MCF 10A (cell line): ENCODE measurements at regions of chr15 and their contacts with region 1.

Region 1: GRCh38 chr15:74906446-74907162 is at the start of gene FAM219B:
- DNase-seq: peak; percentile 87
- H3K4me3 Mint-ChIP-seq: peak within 1 kb of the TSS; percentile 95
- H3K27ac Mint-ChIP-seq: peak within 1 kb of the TSS; percentile 97
- H3K4me1 Mint-ChIP-seq: peaks cover 15% of the 10 kb centered on the region
- H3K27me3 Mint-ChIP-seq: no peaks in the 10 kb centered on the region
- CTCF ChIP-seq: no peak
- total RNA-seq, gene FAM219B: 62.9 and 68.4 TPM in 2 replicates

Region 2: GRCh38 chr15:74781431-74782258 is 125.0 kb before region 1 on chr15 and contains the start of gene CSK:
- CTCF ChIA-PET with region 1: interaction called, 23 read pairs
- POLR2A ChIA-PET with region 1: interaction called, 11 read pairs
- intact Hi-C with region 1: no loop called
- DNase-seq: peak; percentile 68
- H3K4me3 Mint-ChIP-seq: peak within 1 kb of the TSS; percentile 92
- H3K27ac Mint-ChIP-seq: peak within 1 kb of the TSS; percentile 85
- H3K4me1 Mint-ChIP-seq: peaks cover 23% of the 10 kb centered on the region
- H3K27me3 Mint-ChIP-seq: no peaks in the 10 kb centered on the region
- CTCF ChIP-seq: peak; percentile 58
- total RNA-seq, gene CSK: 50.4 and 65.3 TPM in 2 replicates

Region 3: GRCh38 chr15:74816808-74817674 is 89.6 kb before region 1 on chr15:
- CTCF ChIA-PET with region 1: interaction called, 7 read pairs
- POLR2A ChIA-PET with region 1: interaction called, 9 read pairs
- intact Hi-C with region 1: loop called (anchors 1 kb)
- DNase-seq: peak; percentile 70
- H3K4me3 Mint-ChIP-seq: no peak overlapping the region
- H3K27ac Mint-ChIP-seq: peak overlapping the region; percentile 82
- H3K4me1 Mint-ChIP-seq: peaks cover 45% of the 10 kb centered on the region
- H3K27me3 Mint-ChIP-seq: no peaks in the 10 kb centered on the region
- CTCF ChIP-seq: peak; percentile 38

Region 4: DNA sequence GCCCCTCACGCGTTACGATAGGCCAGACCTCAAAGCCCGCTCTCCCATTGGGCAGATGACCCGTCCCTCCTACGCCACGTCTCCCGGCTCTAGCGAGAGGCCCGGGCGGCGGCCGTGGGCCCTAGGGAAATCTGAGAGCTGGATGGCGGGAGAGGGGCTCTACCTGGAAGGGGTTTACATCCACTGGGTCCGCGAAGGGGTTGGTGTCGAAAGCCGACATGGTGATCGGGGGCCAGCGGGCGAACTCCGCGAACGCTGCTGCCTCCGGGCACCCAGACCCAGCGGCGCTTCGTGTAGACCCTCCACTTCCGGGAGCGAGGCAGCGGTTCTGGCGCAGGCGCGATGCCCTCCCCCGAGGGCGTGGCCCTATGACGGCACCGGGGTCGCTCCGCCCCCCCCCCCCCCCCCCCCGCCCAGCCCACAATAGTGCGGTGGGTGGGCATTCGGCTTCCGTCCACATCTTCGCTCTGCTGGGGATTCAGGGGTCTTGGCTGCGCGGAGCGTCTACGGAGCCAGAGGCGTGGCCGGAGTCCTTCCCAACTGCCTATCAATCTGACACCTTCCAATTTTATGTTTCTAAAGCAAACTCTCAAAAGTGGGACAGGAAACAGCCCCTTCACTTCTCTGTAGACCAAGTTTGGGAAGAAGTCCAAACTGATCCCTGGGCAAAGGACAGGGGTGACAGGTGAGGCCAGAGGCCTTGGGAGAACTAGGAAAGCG is 33.4 kb before region 1 on chr15 and contains the start of gene SCAMP2:
- CTCF ChIA-PET with region 1: interaction called, 24 read pairs
- POLR2A ChIA-PET with region 1: interaction called, 29 read pairs
- intact Hi-C with region 1: no loop called
- DNase-seq: peak; percentile 95
- H3K4me3 Mint-ChIP-seq: peak within 1 kb of the TSS; percentile 100
- H3K27ac Mint-ChIP-seq: peak within 1 kb of the TSS; percentile 95
- H3K4me1 Mint-ChIP-seq: peaks cover 27% of the 10 kb centered on the region
- H3K27me3 Mint-ChIP-seq: no peaks in the 10 kb centered on the region
- CTCF ChIP-seq: no peak
- total RNA-seq, gene SCAMP2: 64.4 and 67.7 TPM in 2 replicates

Region 5: GRCh38 chr15:74884428-74885223 is 22.0 kb before region 1 on chr15:
- CTCF ChIA-PET with region 1: interaction called, 38 read pairs
- POLR2A ChIA-PET with region 1: interaction called, 16 read pairs
- intact Hi-C with region 1: no loop called
- DNase-seq: no peak
- H3K4me3 Mint-ChIP-seq: no peak overlapping the region
- H3K27ac Mint-ChIP-seq: no peak overlapping the region
- H3K4me1 Mint-ChIP-seq: peaks cover 13% of the 10 kb centered on the region
- H3K27me3 Mint-ChIP-seq: no peaks in the 10 kb centered on the region
- CTCF ChIP-seq: no peak

Region 6: GRCh38 chr15:74928771-74929198 is 22.2 kb after region 1 on chr15:
- CTCF ChIA-PET with region 1: interaction called, 9 read pairs
- POLR2A ChIA-PET with region 1: interaction called, 11 read pairs
- intact Hi-C with region 1: no loop called
- DNase-seq: no peak
- H3K4me3 Mint-ChIP-seq: no peak overlapping the region
- H3K27ac Mint-ChIP-seq: no peak overlapping the region
- H3K4me1 Mint-ChIP-seq: no peaks in the 10 kb centered on the region
- H3K27me3 Mint-ChIP-seq: no peaks in the 10 kb centered on the region
- CTCF ChIP-seq: no peak

Region 7: DNA sequence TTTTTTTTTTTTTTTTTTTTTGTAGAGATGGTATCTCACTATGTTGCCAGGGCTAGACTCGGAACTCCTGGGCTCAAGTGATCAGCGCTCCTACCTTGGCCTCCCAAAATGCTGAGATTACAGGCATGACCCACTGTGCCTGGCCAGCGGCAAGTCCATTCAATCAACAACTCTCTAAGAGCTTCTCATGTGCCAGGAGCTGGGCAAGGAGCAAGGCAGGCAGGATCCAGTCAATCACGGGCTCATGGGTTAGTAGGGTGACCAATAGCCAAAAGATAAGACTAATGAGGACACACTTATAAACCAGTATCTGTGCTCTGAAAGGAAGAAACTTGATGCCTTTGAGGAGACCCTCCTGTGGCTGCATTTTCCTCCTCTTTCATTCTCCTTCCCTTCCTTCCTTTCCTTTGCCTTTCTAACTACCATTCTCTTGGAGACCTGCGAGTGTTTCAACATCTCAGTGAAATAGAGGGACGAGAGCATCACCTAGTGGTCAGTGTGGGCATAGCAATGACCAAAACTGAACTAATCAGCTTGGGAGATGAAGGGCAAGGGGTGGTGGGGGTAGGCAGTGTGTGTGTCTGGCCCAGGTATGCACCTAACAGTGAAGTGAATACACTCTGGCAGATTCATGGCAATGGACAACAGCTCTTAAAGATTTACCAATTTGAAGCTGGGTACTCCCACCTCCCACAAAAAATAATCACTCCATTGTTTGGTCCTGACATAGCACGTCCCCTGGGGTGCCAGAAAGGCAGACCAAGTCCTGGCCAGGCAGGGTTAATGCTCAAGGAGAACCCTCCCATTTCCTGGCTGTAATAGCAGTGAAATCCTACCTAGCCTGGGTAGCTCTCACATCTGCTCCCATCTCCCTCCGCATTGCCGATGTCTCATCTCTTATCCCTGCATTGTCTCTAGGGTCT is 43.7 kb after region 1 on chr15:
- CTCF ChIA-PET with region 1: interaction called, 16 read pairs
- POLR2A ChIA-PET with region 1: interaction called, 6 read pairs
- intact Hi-C with region 1: no loop called
- DNase-seq: peak; percentile 80
- H3K4me3 Mint-ChIP-seq: no peak overlapping the region
- H3K27ac Mint-ChIP-seq: no peak overlapping the region
- H3K4me1 Mint-ChIP-seq: peaks cover 7% of the 10 kb centered on the region
- H3K27me3 Mint-ChIP-seq: no peaks in the 10 kb centered on the region
- CTCF ChIP-seq: peak; percentile 97

Region 8: DNA sequence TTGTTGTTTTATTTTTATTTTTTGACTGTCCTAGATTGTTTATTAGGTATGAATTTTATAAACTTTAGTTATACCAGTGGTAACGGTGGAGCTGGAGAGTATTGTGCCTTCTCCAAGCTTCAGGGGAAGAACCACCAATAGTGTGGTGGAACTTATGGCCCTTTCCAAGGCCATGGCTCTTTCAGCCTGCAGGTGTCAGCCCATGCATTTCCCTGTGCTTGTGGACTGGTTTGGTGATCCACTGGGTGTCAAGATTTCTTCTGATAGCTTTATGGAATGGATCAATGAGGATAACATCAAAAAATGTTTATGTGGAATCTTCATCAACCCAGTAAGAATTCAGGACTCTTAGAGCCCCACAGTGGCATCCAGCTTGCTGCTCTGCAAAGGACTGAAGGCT is 69.6 kb after region 1 on chr15:
- CTCF ChIA-PET with region 1: no interaction called
- POLR2A ChIA-PET with region 1: no interaction called
- intact Hi-C with region 1: no loop called
- DNase-seq: no peak
- H3K4me3 Mint-ChIP-seq: no peak overlapping the region
- H3K27ac Mint-ChIP-seq: no peak overlapping the region
- H3K4me1 Mint-ChIP-seq: no peaks in the 10 kb centered on the region
- H3K27me3 Mint-ChIP-seq: peaks cover 22% of the 10 kb centered on the region
- CTCF ChIP-seq: no peak

Region 9: DNA sequence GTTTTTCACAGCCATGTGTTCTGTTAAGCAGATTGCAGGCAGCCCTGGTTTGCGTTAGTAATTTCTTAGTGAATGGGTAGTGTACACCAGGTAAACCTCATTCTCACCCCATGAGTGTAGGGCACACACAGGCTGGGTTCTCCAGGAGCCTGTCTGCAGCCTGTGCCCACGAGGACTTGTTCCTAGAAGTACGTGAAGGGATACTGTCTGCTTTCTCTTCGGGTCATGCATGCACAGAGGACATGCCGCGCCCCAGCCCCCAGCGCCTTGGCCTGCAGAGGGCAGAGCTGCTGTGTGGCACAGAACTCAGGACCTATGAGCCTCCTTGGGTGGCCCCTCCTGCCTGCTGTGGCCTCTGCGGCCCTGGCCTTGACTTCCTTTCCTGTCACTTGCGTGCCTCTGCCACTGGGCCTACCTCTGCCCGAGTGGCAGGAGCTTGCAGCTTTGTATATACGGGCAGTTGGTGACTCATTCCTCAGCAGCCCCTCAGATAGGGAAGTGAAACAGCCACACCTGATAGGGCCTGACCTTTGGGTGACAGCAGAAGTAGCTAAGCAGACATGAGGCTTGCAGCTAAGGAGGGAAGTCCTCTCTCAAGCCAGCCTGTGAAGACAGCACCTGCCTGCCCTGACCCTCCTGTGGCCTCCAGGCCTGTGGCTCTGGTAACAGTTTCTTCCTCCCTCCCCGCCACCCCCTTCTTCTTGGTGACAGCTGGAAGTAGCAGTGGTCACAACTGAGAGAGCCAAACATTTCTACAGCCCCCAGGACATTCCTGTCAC is 136.3 kb after region 1 on chr15:
- CTCF ChIA-PET with region 1: no interaction called
- POLR2A ChIA-PET with region 1: no interaction called
- intact Hi-C with region 1: no loop called
- DNase-seq: peak; percentile 39
- H3K4me3 Mint-ChIP-seq: no peak overlapping the region
- H3K27ac Mint-ChIP-seq: peak overlapping the region; percentile 76
- H3K4me1 Mint-ChIP-seq: peaks cover 16% of the 10 kb centered on the region
- H3K27me3 Mint-ChIP-seq: no peaks in the 10 kb centered on the region
- CTCF ChIP-seq: peak; percentile 29

Region 10: GRCh38 chr15:75138016-75138999 is 231.7 kb after region 1 on chr15:
- CTCF ChIA-PET with region 1: no interaction called
- POLR2A ChIA-PET with region 1: no interaction called
- intact Hi-C with region 1: no loop called
- DNase-seq: no peak
- H3K4me3 Mint-ChIP-seq: no peak overlapping the region
- H3K27ac Mint-ChIP-seq: no peak overlapping the region
- H3K4me1 Mint-ChIP-seq: no peaks in the 10 kb centered on the region
- H3K27me3 Mint-ChIP-seq: no peaks in the 10 kb centered on the region
- CTCF ChIP-seq: no peak